Activated T-helper 2 cell treated with anti-CD3 and anti-CD28 coated beads, Interferon-gamma antibody, Interleukin-2, Interleukin-4, amounts not matched to agents 10 μg/mL and 5 μg/mL and 100 μg/mL, durations not matched to agents 14 hours and 24 hours and 36 hours (primary cell): ENCODE measurements at regions of chr21 and their contacts with region 1.

Region 1: GRCh38 chr21:26451081-26451740 is 121.9 kb downstream of the CYYR1 start:
- DNase-seq: no peak
- H3K4me3 Mint-ChIP-seq: no peak overlapping the region
- H3K27ac Mint-ChIP-seq: peak overlapping the region; percentile 37
- H3K4me1 Mint-ChIP-seq: peaks cover 19% of the 10 kb centered on the region
- H3K27me3 Mint-ChIP-seq: no peaks in the 10 kb centered on the region

Region 2: DNA sequence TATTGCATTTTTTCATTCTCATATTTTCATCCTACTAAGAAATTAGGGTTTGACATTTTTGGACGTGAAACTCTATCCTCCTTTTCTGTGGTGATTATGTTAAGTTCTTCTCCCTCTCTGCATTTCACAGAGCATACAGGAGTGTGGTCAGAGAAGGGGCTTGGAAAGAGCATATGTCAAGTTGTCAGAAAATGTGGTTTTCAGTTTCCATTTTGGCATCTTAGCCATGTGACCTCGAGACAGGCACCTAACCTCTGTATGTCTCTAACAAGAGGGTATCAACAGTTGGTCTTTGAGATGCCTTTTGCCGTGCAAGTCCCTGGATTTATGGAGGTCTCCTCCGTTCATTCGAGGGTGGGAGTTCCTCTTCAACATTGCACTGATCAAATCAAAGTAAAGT is 18.8 kb before region 1 on chr21:
- intact Hi-C with region 1: loop called (anchors 1 kb)
- DNase-seq: no peak
- H3K4me3 Mint-ChIP-seq: no peak overlapping the region
- H3K27ac Mint-ChIP-seq: no peak overlapping the region
- H3K4me1 Mint-ChIP-seq: peaks cover 17% of the 10 kb centered on the region
- H3K27me3 Mint-ChIP-seq: no peaks in the 10 kb centered on the region